GM10248 (cell line): ENCODE measurements at regions of chr15 and their contacts with region 1.

Region 1: GRCh38 chr15:96356494-96357455 is 26.3 kb downstream of the NR2F2 start:
- DNase-seq: peak; percentile 79
- CTCF ChIP-seq: peak; percentile 92

Region 2: DNA sequence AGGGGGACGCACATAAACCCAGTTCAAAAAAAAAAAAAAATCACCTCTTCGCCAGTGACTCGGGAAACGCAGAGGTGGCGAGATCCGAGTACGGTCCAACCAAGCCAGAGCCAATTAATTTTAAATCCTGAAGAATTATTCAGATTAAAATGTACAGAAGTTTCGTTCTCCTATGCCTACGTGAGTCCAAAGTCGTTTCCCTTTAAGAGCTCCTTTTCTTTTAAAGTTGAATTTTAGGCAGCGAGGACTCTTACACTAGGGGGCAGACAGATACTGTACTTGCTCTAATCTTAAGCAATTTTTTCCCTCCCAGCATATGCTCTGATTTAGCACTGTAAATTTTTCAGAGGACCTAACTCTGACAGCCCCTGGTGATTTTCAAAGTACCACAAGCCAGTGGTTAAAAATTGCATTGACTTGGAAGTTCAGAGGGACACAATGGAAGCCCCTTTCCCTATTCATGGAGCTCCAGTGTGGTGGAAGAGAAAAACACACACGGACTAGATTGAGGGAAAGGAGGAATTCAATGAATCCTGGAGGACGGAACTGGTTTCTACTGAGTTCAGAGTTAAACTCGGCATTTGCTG is 29.5 kb before region 1 on chr15:
- CTCF ChIA-PET with region 1: interaction called, 19 read pairs
- POLR2A ChIA-PET with region 1: no interaction called
- DNase-seq: no peak
- CTCF ChIP-seq: no peak

Region 3: GRCh38 chr15:96336642-96337364 is 20.0 kb before region 1 on chr15:
- CTCF ChIA-PET with region 1: interaction called, 20 read pairs
- POLR2A ChIA-PET with region 1: no interaction called
- DNase-seq: no peak
- CTCF ChIP-seq: no peak

Region 4: DNA sequence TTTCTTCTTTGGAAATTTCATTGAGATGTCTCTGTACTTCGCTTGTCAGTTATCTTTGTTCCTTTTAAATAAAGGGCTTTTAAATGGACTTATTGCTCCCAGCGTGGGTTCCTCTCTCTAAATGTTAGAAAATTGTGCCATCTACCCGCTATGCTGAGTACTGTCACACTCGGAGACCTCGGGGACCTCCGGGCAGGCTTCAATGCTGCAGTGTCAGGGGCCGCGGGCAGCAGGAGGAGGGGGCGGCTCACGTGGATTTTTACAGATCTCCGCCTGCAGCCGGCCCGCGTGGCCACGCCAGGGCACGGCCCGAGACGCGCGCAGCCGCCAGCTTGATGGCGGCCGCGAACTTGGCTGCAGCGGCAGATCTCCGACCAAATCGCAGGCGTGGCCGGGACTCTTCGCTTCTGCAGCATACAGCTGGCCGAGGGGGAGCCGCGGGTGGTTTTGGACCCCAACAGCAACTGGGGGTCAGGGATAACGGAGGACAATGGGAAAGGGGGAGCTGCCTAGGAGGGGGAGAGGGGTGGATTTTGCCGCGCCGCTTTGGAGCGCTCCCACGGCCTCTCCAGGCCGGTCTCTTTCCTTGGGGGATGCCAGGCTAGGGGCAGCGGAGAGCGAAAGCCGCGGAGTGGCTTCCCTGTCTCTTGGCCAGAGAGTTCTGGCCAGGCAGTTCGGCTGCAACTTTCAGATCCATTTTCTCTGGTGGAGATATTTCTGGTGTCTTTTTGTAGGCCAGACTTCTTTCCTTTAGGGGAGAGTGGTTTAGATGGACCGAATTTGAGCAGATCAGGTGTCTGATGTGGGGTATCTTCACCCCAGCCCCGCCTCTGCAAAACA is 11.0 kb before region 1 on chr15:
- CTCF ChIA-PET with region 1: interaction called, 20 read pairs
- POLR2A ChIA-PET with region 1: no interaction called
- DNase-seq: peak; percentile 62
- CTCF ChIP-seq: peak; percentile 61

Region 5: GRCh38 chr15:96367311-96368200 is 10.8 kb after region 1 on chr15:
- CTCF ChIA-PET with region 1: interaction called, 11 read pairs
- POLR2A ChIA-PET with region 1: no interaction called
- DNase-seq: peak; percentile 8
- CTCF ChIP-seq: no peak

Region 6: GRCh38 chr15:96514607-96515285 is 158.0 kb after region 1 on chr15:
- CTCF ChIA-PET with region 1: no interaction called
- POLR2A ChIA-PET with region 1: no interaction called
- DNase-seq: no peak
- CTCF ChIP-seq: no peak